ENCODE measurements at regions of chr2 and their contacts with region 1.

Region 1: DNA sequence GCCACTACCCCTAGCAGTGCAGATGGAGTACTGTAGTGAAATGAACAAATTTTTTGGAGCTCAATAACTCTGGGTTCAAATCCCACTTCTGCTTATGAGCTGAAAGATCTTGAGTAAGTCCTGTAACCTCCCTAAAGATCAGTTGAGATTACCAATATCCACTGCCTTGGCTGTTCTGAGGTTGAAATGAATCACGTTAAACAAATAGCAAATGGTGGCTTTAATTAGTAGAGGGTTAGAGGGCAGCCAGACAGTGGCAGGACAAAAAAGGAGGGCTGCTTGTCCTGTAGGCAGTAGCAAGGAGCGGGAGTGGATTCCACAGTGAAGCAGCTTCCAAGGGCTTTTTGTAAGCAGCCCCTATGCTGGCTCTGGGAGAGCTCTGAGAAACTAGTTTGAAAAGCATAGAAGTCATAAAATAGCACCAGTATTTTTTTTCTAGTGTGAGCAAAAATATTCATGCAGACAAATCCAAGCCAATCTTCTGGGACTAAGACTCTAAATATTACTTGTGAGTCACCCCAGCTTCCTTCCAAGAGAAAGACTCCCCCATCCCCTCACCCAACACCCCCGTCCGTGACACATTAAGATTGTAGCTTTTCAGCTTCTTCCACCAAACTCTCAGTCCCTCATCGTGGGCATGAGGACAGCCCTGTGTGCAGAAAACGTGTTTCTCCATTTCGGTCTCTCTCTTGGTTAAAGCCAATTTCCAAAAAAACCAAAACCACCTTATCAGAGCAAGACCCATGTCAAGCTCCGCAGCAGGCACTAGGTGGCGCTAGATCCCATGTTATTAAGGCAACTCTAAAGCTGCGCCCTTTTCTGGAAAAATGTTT is 123.5 kb upstream of the LGALSL start:
- DNase-seq: peak; percentile 52
- CTCF ChIP-seq: peak; percentile 95

Region 2: DNA sequence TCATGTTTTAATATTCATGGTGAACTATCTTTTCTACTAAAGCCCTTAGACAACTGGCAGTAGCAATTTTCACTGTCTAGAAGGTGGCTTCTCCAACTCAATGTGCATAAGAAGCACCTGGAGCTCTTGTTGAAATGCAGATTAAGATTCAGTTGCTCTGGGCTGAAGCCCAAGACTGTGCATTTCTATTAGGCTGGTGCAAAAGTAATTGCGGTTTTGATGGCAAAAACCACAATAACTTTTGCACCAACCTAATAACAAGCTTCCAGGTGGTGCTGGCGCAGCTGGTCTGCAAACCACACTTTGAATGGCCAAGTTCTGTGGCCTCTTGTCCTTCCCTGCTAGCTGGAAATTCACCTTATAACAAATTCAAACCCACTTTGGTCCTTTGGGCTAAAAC is 284.6 kb before region 1 on chr2:
- CTCF ChIA-PET with region 1: interaction called, 110 read pairs
- POLR2A ChIA-PET with region 1: no interaction called
- DNase-seq: no peak
- CTCF ChIP-seq: no peak

Region 3: DNA sequence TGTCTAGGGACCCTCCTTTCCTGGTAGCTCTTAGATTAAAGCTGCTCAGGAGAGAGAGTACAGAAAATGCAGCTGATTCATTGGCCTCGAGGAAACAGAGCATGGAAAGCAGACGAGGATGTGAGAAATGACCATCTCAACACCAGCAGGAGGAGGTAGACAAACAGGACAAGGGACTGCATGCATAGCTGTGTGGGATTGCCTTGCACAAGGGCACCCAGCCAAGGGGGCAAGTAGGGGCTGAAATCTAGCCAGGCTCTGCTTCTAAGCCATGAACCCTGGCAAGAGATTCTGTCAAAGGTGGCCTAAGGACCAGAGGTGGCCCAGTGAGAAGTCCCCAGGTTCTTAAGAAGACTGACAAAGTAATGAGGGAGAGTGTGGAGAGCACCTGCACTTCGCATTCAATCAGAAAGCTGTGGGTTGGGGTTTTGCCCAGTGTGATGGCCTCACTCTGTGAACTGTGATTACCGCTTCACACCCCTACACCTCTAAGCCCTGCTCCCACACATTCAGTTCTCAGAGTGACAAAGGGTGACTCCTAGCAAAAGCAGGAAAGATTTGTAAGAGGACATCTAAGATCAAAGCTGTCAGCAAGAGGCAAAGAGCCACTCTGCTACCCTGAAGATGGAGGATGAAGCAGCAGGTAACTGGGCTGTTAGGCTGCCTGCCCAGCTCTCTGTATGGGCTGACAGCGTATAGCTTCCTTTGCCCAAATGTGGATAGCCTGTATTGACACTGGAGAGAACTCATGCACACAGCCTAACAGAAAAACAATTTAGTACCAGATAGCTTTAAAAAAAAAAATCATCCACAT is 35.0 kb before region 1 on chr2:
- CTCF ChIA-PET with region 1: interaction called, 12 read pairs
- POLR2A ChIA-PET with region 1: interaction called, 8 read pairs
- DNase-seq: peak; percentile 60
- CTCF ChIP-seq: no peak

Region 4: GRCh38 chr2:64354857-64355680 is 24.6 kb after region 1 on chr2:
- CTCF ChIA-PET with region 1: interaction called, 26 read pairs
- POLR2A ChIA-PET with region 1: no interaction called
- DNase-seq: no peak
- CTCF ChIP-seq: no peak

Region 5: GRCh38 chr2:64488050-64488974 is 157.8 kb after region 1 on chr2:
- CTCF ChIA-PET with region 1: interaction called, 312 read pairs
- POLR2A ChIA-PET with region 1: no interaction called
- DNase-seq: peak; percentile 76
- CTCF ChIP-seq: peak; percentile 97

Region 6: GRCh38 chr2:64523666-64524603 is 193.4 kb after region 1 on chr2 and contains the start of gene AFTPH:
- CTCF ChIA-PET with region 1: interaction called, 36 read pairs
- POLR2A ChIA-PET with region 1: interaction called, 3 read pairs
- DNase-seq: peak; percentile 98
- CTCF ChIP-seq: no peak

Region 7: DNA sequence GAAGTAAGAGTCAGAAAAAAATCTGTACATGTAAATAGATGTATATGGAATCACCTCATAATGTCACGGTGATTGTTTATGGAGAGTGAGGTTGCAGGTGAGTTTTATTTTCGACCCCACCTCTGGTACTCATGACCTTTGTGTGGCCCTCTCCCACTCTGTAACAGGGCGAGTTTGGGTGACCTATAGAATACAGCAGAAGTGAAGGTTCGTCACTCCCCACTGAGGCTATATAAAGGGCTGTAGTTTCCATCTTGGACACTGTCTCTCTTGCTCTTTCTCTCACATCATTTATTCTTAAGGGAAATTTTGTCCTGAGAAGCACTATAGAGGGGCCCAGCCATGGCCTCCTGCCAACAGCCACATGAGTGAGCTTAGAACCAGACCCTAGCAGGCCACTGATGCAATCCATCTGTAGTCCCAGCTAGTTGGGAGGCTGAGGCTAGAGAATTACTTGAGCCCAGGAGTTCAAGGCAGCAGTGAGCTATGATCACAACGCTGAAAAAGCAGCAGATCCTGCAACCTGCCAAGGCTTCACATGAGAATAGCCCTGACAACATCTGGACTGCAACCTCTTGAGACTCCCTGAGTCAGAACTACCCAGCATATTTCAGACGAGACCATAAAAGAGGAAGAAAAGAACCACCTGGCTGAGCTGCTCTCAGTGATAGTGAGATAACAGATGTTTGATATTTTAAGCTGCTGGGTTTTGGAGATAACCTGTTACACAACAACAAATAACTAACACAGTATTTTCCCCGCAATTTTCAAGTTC is 584.4 kb after region 1 on chr2:
- CTCF ChIA-PET with region 1: interaction called, 10 read pairs
- POLR2A ChIA-PET with region 1: no interaction called
- DNase-seq: peak; percentile 72
- CTCF ChIP-seq: no peak

Measured in GM10248 (cell line).